ENCODE measurements at regions of chr1 and their contacts with region 1.

Region 1: GRCh38 chr1:13764588-13765332 is 64.8 kb downstream of the PRDM2 start:
- DNase-seq: no peak
- H3K4me3 ChIP-seq: no peak overlapping the region
- CTCF ChIP-seq: peak; percentile 7

Region 2: GRCh38 chr1:13754510-13755103 is 10.2 kb before region 1 on chr1:
- CTCF ChIA-PET with region 1: interaction called, 18 read pairs
- POLR2A ChIA-PET with region 1: interaction called, 7 read pairs
- DNase-seq: no peak
- H3K4me3 ChIP-seq: no peak overlapping the region
- CTCF ChIP-seq: no peak

Region 3: GRCh38 chr1:13775459-13775858 is 10.7 kb after region 1 on chr1:
- CTCF ChIA-PET with region 1: interaction called, 10 read pairs
- POLR2A ChIA-PET with region 1: interaction called, 3 read pairs
- DNase-seq: no peak
- H3K4me3 ChIP-seq: no peak overlapping the region
- CTCF ChIP-seq: no peak

Measured in AG04449 (cell line).